ENCODE measurements at regions of chr11 and their contacts with region 1.

Region 1: GRCh38 chr11:124673333-124674167 is at the starts of genes SIAE and SPA17:
- DNase-seq: peak; percentile 95
- ATAC-seq: peak; percentile 97
- H3K4me3 ChIP-seq: peak within 1 kb of the TSS; percentile 90
- H3K27ac ChIP-seq: peak within 1 kb of the TSS; percentile 77
- H3K4me1 ChIP-seq: peaks cover 9% of the 10 kb centered on the region
- H3K27me3 ChIP-seq: no peaks in the 10 kb centered on the region
- CTCF ChIP-seq: no peak
- POLR2A ChIP-seq: peak; percentile 80
- RAD21 ChIP-seq: no peak
- total RNA-seq, gene SIAE: 3.3 and 4.7 TPM in 2 replicates
- total RNA-seq, gene SPA17: 9.9 and 14.4 TPM in 2 replicates

Region 2: GRCh38 chr11:124301482-124302027 is 372.0 kb before region 1 on chr11:
- CTCF ChIA-PET with region 1: no interaction called
- POLR2A ChIA-PET with region 1: no interaction called
- dilution Hi-C with region 1: no loop called
- in situ Hi-C with region 1: no loop called
- intact Hi-C with region 1: no loop called
- DNase-seq: peak; percentile 54
- ATAC-seq: peak; percentile 40; the same call in 1 of the 2 replicates
- H3K4me3 ChIP-seq: no peak overlapping the region
- H3K27ac ChIP-seq: no peak overlapping the region
- H3K4me1 ChIP-seq: peaks cover 2% of the 10 kb centered on the region; the same call in 1 of the 2 replicates
- H3K27me3 ChIP-seq: no peaks in the 10 kb centered on the region
- CTCF ChIP-seq: no peak
- POLR2A ChIP-seq: no peak
- RAD21 ChIP-seq: no peak

Region 3: DNA sequence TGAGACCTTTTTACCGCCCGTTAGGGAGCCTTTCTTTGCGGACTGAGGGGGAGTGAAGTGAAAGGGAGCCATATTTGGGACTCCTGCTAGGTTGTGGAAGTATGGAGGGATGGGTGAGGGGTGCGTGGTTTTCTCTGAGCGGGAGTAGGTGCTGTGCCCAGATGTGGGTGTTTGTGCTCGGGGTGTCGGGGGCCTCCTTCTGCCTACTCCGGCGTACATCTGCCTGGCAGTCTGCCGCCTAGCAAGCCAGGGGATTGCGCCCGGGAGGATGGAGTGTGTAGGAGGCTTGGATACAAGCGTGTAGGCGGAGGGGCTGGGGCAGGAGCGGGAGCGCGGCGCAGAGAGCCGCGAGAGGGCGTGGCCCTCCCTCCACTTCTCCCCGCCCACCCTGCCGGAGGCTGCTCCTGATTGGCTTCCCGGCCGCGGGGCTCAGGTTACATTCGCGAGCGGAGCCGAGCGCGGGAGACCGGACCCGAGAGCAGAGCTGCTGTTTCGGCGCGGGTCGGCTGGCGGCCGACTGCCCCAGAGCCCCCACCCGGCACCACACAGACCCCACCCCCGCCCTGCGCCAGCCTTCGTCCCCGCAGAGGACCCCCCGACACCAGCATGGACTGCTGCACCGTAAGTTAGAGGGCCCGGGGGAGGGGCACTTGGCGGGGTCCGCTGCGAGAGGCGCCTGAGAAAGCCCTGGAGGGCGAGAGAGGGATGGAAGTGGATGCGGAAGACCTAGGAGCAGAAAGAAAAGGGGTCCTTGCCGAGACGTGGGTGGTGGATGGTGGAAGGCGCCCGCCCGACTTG is 66.1 kb after region 1 on chr11 and contains the start of gene NRGN:
- CTCF ChIA-PET with region 1: no interaction called
- POLR2A ChIA-PET with region 1: interaction called, 3 read pairs
- dilution Hi-C with region 1: no loop called
- in situ Hi-C with region 1: no loop called
- intact Hi-C with region 1: loop called (anchors 10 kb)
- DNase-seq: peak; percentile 82
- ATAC-seq: peak; percentile 99
- H3K4me3 ChIP-seq: peak within 1 kb of the TSS; percentile 52
- H3K27ac ChIP-seq: no peak within 1 kb of the TSS; the same call in 1 of the 2 replicates
- H3K4me1 ChIP-seq: peaks cover 2% of the 10 kb centered on the region; the same call in 1 of the 2 replicates
- H3K27me3 ChIP-seq: peaks cover 18% of the 10 kb centered on the region
- CTCF ChIP-seq: no peak
- POLR2A ChIP-seq: no peak
- RAD21 ChIP-seq: no peak
- total RNA-seq, gene NRGN: 0.54 and 0.83 TPM in 2 replicates

Region 4: DNA sequence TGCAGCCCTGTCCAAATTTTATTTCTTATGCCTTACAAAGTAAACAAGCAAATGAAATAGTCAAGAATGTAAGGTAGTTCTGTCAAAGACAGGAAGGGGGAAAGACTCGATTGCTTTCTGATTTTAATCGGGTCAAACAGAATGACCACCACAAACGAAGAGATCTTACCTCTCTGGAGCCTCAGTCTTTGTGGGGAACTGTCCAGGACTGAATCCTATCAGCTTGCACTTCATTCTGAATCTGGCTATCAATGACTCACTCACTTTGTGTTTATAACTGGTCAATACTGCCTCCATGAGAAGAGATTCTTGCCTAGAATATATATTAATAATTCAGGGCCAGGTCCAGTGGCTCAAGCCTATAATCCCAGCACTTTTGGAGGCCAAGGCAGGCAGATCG is 109.5 kb after region 1 on chr11:
- CTCF ChIA-PET with region 1: no interaction called
- POLR2A ChIA-PET with region 1: no interaction called
- dilution Hi-C with region 1: no loop called
- in situ Hi-C with region 1: no loop called
- intact Hi-C with region 1: no loop called
- DNase-seq: peak; percentile 15
- ATAC-seq: peak; percentile 44; the same call in 1 of the 2 replicates
- H3K4me3 ChIP-seq: no peak overlapping the region
- H3K27ac ChIP-seq: no peak overlapping the region
- H3K4me1 ChIP-seq: no peaks in the 10 kb centered on the region
- H3K27me3 ChIP-seq: no peaks in the 10 kb centered on the region
- CTCF ChIP-seq: no peak
- POLR2A ChIP-seq: no peak
- RAD21 ChIP-seq: no peak

Region 5: GRCh38 chr11:124793466-124794278 is 120.1 kb after region 1 on chr11:
- CTCF ChIA-PET with region 1: no interaction called
- POLR2A ChIA-PET with region 1: interaction called, 3 read pairs
- dilution Hi-C with region 1: no loop called
- in situ Hi-C with region 1: no loop called
- intact Hi-C with region 1: loop called (anchors 1 kb)
- DNase-seq: peak; percentile 40
- ATAC-seq: peak; percentile 69
- H3K4me3 ChIP-seq: no peak overlapping the region
- H3K27ac ChIP-seq: no peak overlapping the region
- H3K4me1 ChIP-seq: peaks cover 7% of the 10 kb centered on the region
- H3K27me3 ChIP-seq: no peaks in the 10 kb centered on the region
- CTCF ChIP-seq: peak; percentile 65
- POLR2A ChIP-seq: no peak
- RAD21 ChIP-seq: peak; percentile 55

Region 6: GRCh38 chr11:124837491-124837856 is 163.9 kb after region 1 on chr11:
- CTCF ChIA-PET with region 1: interaction called, 4 read pairs
- POLR2A ChIA-PET with region 1: no interaction called
- dilution Hi-C with region 1: no loop called
- in situ Hi-C with region 1: no loop called
- intact Hi-C with region 1: loop called (anchors 1 kb)
- DNase-seq: peak; percentile 90
- ATAC-seq: peak; percentile 82
- H3K4me3 ChIP-seq: no peak overlapping the region
- H3K27ac ChIP-seq: no peak overlapping the region
- H3K4me1 ChIP-seq: no peaks in the 10 kb centered on the region; the same call in 1 of the 2 replicates
- H3K27me3 ChIP-seq: peaks cover 49% of the 10 kb centered on the region
- CTCF ChIP-seq: peak; percentile 80
- POLR2A ChIP-seq: no peak
- RAD21 ChIP-seq: peak; percentile 69

Region 7: DNA sequence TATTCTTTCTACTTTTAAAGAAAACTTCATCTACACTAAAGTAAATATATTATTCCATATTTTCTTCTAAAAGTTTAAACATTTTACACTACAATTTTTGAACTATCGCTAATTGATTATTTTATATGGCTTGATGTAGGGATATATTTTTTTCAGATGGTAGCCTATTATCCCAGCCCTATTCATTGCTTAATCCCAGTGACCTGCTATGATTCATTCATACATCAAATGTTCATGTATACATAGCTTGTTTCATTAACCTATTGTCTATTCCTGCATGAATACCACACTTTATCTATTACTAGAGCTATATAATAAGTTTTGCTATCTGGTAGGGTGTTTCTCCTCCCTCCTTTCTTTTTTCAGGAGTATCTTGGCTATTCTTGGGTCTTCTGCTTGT is 229.1 kb after region 1 on chr11:
- CTCF ChIA-PET with region 1: no interaction called
- POLR2A ChIA-PET with region 1: no interaction called
- dilution Hi-C with region 1: no loop called
- in situ Hi-C with region 1: no loop called
- intact Hi-C with region 1: no loop called
- DNase-seq: peak; percentile 40
- ATAC-seq: no peak
- H3K4me3 ChIP-seq: no peak overlapping the region
- H3K27ac ChIP-seq: no peak overlapping the region
- H3K4me1 ChIP-seq: peaks cover 28% of the 10 kb centered on the region
- H3K27me3 ChIP-seq: no peaks in the 10 kb centered on the region
- CTCF ChIP-seq: no peak
- POLR2A ChIP-seq: no peak
- RAD21 ChIP-seq: no peak

Region 8: GRCh38 chr11:125102510-125102909 is 429.0 kb after region 1 on chr11:
- CTCF ChIA-PET with region 1: interaction called, 10 read pairs
- POLR2A ChIA-PET with region 1: no interaction called
- dilution Hi-C with region 1: no loop called
- in situ Hi-C with region 1: no loop called
- intact Hi-C with region 1: no loop called
- DNase-seq: peak; percentile 24
- ATAC-seq: no peak
- H3K4me3 ChIP-seq: no peak overlapping the region
- H3K27ac ChIP-seq: no peak overlapping the region
- H3K4me1 ChIP-seq: peaks cover 2% of the 10 kb centered on the region; the same call in 1 of the 2 replicates
- H3K27me3 ChIP-seq: no peaks in the 10 kb centered on the region
- CTCF ChIP-seq: no peak
- POLR2A ChIP-seq: no peak
- RAD21 ChIP-seq: no peak

Measured in IMR-90 (cell line).